ENCODE measurements at regions of chr15 and their contacts with region 1.

Region 1: GRCh38 chr15:83564975-83565532 is 88.9 kb upstream of the ADAMTSL3 start:
- DNase-seq: no peak
- H3K4me3 ChIP-seq: no peak overlapping the region
- H3K4me3 Mint-ChIP-seq: no peak overlapping the region
- H3K27ac Mint-ChIP-seq: no peak overlapping the region
- H3K4me1 ChIP-seq: no peaks in the 10 kb centered on the region
- H3K4me1 Mint-ChIP-seq: no peaks in the 10 kb centered on the region
- H3K27me3 ChIP-seq: no peaks in the 10 kb centered on the region
- H3K27me3 Mint-ChIP-seq: peaks cover 3% of the 10 kb centered on the region
- CTCF ChIP-seq: no peak

Region 2: DNA sequence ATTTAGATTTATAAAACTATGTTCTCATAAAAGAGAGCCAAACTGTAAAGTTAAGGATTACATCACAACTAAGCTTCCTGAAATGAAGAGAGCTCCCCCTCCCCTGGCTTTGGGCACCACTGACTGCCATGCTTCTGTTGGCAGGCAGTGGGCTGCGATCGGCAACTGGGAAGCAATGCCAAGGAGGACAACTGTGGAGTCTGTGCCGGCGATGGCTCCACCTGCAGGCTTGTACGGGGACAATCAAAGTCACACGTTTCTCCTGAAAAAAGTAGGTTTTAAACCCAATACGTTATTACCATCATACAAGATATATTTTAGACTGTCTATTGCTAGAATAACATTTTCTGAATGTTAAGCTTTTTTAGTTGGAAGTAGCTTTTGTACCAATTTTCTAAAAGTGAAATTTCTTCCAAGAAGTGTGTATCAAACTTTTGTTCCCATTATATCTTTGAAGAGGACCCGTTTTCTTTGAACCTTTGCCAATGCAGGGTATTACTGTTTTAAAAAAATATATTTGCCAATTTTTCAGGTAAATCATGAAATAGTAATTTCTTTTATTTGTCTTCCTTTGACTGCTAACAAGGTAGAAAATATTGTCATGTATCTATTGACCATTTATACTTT is 273.0 kb after region 1 on chr15:
- CTCF ChIA-PET with region 1: no interaction called
- POLR2A ChIA-PET with region 1: no interaction called
- intact Hi-C with region 1: loop called (anchors 1 kb)
- DNase-seq: peak; percentile 36 to 47
- H3K4me3 ChIP-seq: no peak overlapping the region
- H3K4me3 Mint-ChIP-seq: no peak overlapping the region
- H3K27ac Mint-ChIP-seq: no peak overlapping the region
- H3K4me1 ChIP-seq: no peaks in the 10 kb centered on the region
- H3K4me1 Mint-ChIP-seq: no peaks in the 10 kb centered on the region
- H3K27me3 ChIP-seq: no peaks in the 10 kb centered on the region
- H3K27me3 Mint-ChIP-seq: peaks cover 17% of the 10 kb centered on the region
- CTCF ChIP-seq: peak; percentile 52 to 53

Region 3: GRCh38 chr15:84035399-84035766 is 470.3 kb after region 1 on chr15:
- CTCF ChIA-PET with region 1: no interaction called
- POLR2A ChIA-PET with region 1: no interaction called
- intact Hi-C with region 1: loop called (anchors 1 kb)
- DNase-seq: peak in 1 of 2 experiments; percentile 24
- H3K4me3 ChIP-seq: no peak overlapping the region
- H3K4me3 Mint-ChIP-seq: no peak overlapping the region
- H3K27ac Mint-ChIP-seq: no peak overlapping the region
- H3K4me1 ChIP-seq: no peaks in the 10 kb centered on the region
- H3K4me1 Mint-ChIP-seq: no peaks in the 10 kb centered on the region
- H3K27me3 ChIP-seq: no peaks in the 10 kb centered on the region
- H3K27me3 Mint-ChIP-seq: peaks cover 3% of the 10 kb centered on the region
- CTCF ChIP-seq: peak; percentile 23 to 59

Measured in Caco-2 (cell line).